ENCODE measurements at regions of chr21 and their contacts with region 1.

Region 1: GRCh38 chr21:42400525-42400924 is 3.2 kb upstream of the UBASH3A start:
- DNase-seq: peak in 1 of 9 donors; percentile 54
- ATAC-seq: no peak
- H3K4me3 ChIP-seq: no peak overlapping the region
- H3K4me3 Mint-ChIP-seq: peak overlapping the region in 4 of 10 donors; percentile 18 to 37 (median 32)
- H3K27ac ChIP-seq: no peak overlapping the region
- H3K27ac Mint-ChIP-seq: peak overlapping the region in 5 of 9 donors; percentile 8 to 87 (median 32)
- H3K4me1 ChIP-seq: peaks cover 21 to 42% of the 10 kb centered on the region in 2 donors
- H3K4me1 Mint-ChIP-seq: peaks cover 32 to 71% (median 61%) of the 10 kb centered on the region in 7 donors
- H3K27me3 ChIP-seq: no peaks in the 10 kb centered on the region
- H3K27me3 Mint-ChIP-seq: no peaks in the 10 kb centered on the region

Region 2: GRCh38 chr21:41466024-41466835 is 934.3 kb before region 1 on chr21:
- CTCF ChIA-PET with region 1: no interaction called
- POLR2A ChIA-PET with region 1: no interaction called
- intact Hi-C with region 1: no loop called
- DNase-seq: no peak
- ATAC-seq: no peak
- H3K4me3 ChIP-seq: no peak overlapping the region
- H3K4me3 Mint-ChIP-seq: no peak overlapping the region
- H3K27ac ChIP-seq: no peak overlapping the region
- H3K27ac Mint-ChIP-seq: no peak overlapping the region
- H3K4me1 ChIP-seq: no peaks in the 10 kb centered on the region
- H3K4me1 Mint-ChIP-seq: peaks cover 0 to 16% (median 0%) of the 10 kb centered on the region in 7 donors
- H3K27me3 ChIP-seq: no peaks in the 10 kb centered on the region
- H3K27me3 Mint-ChIP-seq: peaks cover 6 to 32% (median 22%) of the 10 kb centered on the region in 5 donors

Region 3: GRCh38 chr21:42337830-42338728 is 62.4 kb before region 1 on chr21:
- CTCF ChIA-PET with region 1: interaction called, 17 read pairs
- POLR2A ChIA-PET with region 1: interaction called, 6 read pairs
- intact Hi-C with region 1: loop called in 1 of 2 experiments (anchors 1 kb)
- DNase-seq: peak; percentile 68 to 85 (median 78)
- ATAC-seq: peak; percentile 99
- H3K4me3 ChIP-seq: no peak overlapping the region
- H3K4me3 Mint-ChIP-seq: peak overlapping the region; percentile 28 to 76 (median 60)
- H3K27ac ChIP-seq: no peak overlapping the region
- H3K27ac Mint-ChIP-seq: peak overlapping the region in 7 of 9 donors; percentile 19 to 75 (median 53)
- H3K4me1 ChIP-seq: peaks cover 4 to 7% of the 10 kb centered on the region in 2 donors
- H3K4me1 Mint-ChIP-seq: peaks cover 5 to 12% (median 8%) of the 10 kb centered on the region in 7 donors
- H3K27me3 ChIP-seq: no peaks in the 10 kb centered on the region
- H3K27me3 Mint-ChIP-seq: peaks cover 0 to 32% (median 0%) of the 10 kb centered on the region in 5 donors

Region 4: GRCh38 chr21:42350896-42351543 is 49.5 kb before region 1 on chr21 and contains the start of gene TFF2:
- CTCF ChIA-PET with region 1: no interaction called
- POLR2A ChIA-PET with region 1: no interaction called
- intact Hi-C with region 1: no loop called
- DNase-seq: peak in 1 of 9 donors; percentile 18
- ATAC-seq: no peak
- H3K4me3 ChIP-seq: no peak within 1 kb of the TSS
- H3K4me3 Mint-ChIP-seq: no peak within 1 kb of the TSS
- H3K27ac ChIP-seq: no peak within 1 kb of the TSS
- H3K27ac Mint-ChIP-seq: peak within 1 kb of the TSS in 1 of 9 donors; percentile 72
- H3K4me1 ChIP-seq: no peaks in the 10 kb centered on the region
- H3K4me1 Mint-ChIP-seq: peaks cover 0 to 3% (median 0%) of the 10 kb centered on the region in 7 donors
- H3K27me3 ChIP-seq: no peaks in the 10 kb centered on the region
- H3K27me3 Mint-ChIP-seq: peaks cover 0 to 10% (median 0%) of the 10 kb centered on the region in 5 donors
- total RNA-seq, gene TFF2: not detected

Region 5: DNA sequence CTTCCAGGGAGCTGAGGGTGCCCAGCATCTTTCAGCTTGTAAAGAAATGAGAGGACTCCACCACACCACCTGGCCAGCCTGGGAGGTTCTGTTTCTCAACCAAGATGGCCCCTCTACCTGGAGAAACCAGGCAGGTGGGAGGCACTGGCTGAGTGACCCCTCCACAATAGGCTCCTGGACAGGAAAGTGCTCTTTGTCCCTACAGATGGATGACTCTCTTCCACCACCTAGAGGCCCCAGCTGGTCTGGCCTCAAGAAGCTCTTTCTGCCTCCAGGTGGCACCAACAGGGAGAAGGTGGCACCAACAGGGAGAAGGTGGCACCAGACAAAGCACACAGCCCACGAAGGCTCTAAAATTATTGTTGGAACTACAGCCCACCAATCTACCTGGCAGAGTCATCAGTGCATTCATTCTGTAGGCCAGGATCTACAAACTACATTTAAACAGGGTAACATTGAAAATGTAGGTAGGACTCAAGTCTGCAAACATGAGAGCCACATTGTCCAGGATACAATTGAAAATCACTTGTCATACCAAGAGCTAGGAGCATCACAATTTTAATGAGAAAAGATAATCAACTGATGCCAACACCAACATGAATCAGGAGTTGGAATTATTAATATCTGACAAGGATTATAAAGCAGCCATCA is 19.1 kb before region 1 on chr21:
- CTCF ChIA-PET with region 1: interaction called, 18 read pairs
- POLR2A ChIA-PET with region 1: interaction called, 9 read pairs
- intact Hi-C with region 1: loop called in 1 of 2 experiments (anchors 1 kb)
- DNase-seq: peak in 4 of 9 donors; percentile 22 to 41 (median 29)
- ATAC-seq: peak; percentile 77
- H3K4me3 ChIP-seq: no peak overlapping the region
- H3K4me3 Mint-ChIP-seq: no peak overlapping the region
- H3K27ac ChIP-seq: no peak overlapping the region
- H3K27ac Mint-ChIP-seq: peak overlapping the region in 2 of 9 donors; percentile 29 to 71
- H3K4me1 ChIP-seq: peaks cover 0 to 14% of the 10 kb centered on the region in 2 donors
- H3K4me1 Mint-ChIP-seq: peaks cover 6 to 29% (median 25%) of the 10 kb centered on the region in 7 donors
- H3K27me3 ChIP-seq: no peaks in the 10 kb centered on the region
- H3K27me3 Mint-ChIP-seq: no peaks in the 10 kb centered on the region

Region 6: DNA sequence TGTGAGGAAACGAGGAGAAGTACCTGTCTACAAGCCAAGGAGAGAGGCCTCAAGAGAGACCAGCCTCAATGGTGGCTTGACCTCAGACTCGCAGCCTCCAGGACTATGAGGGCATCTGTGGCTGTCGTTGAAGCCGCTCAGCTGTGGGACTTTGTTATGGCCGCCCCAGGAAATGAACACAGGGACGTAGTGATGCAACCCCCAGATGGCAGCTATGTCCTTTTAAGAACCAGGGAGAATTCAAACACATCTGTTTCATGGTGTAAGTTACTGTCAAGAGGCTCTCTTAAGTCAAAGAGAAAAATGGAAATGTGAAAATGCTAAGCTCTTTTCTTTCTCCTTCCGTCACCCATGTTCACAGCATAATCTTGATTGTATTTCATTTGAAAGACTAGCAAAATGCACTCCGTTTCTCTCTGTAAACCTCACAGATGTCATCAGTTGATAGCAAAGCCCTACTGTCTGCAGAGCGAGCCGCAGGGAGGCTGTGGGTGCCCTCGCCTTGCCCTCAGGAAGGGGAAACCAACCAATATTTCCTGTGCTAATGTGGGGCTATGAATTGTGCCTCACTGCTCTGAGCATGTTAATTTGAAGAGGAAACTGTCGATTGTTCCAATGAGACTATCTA is 24.5 kb after region 1 on chr21:
- CTCF ChIA-PET with region 1: interaction called, 32 read pairs
- POLR2A ChIA-PET with region 1: interaction called, 181 read pairs
- intact Hi-C with region 1: loop called in 1 of 2 experiments (anchors 1 kb)
- DNase-seq: peak; percentile 44 to 90 (median 84)
- ATAC-seq: peak; percentile 94
- H3K4me3 ChIP-seq: peak overlapping the region; percentile 22
- H3K4me3 Mint-ChIP-seq: peak overlapping the region; percentile 54 to 86 (median 80)
- H3K27ac ChIP-seq: peak overlapping the region; percentile 85
- H3K27ac Mint-ChIP-seq: peak overlapping the region; percentile 83 to 94 (median 89)
- H3K4me1 ChIP-seq: peaks cover 68 to 71% of the 10 kb centered on the region in 2 donors
- H3K4me1 Mint-ChIP-seq: peaks cover 59 to 88% (median 81%) of the 10 kb centered on the region in 7 donors
- H3K27me3 ChIP-seq: no peaks in the 10 kb centered on the region
- H3K27me3 Mint-ChIP-seq: peaks cover 0 to 6% (median 0%) of the 10 kb centered on the region in 5 donors

Region 7: DNA sequence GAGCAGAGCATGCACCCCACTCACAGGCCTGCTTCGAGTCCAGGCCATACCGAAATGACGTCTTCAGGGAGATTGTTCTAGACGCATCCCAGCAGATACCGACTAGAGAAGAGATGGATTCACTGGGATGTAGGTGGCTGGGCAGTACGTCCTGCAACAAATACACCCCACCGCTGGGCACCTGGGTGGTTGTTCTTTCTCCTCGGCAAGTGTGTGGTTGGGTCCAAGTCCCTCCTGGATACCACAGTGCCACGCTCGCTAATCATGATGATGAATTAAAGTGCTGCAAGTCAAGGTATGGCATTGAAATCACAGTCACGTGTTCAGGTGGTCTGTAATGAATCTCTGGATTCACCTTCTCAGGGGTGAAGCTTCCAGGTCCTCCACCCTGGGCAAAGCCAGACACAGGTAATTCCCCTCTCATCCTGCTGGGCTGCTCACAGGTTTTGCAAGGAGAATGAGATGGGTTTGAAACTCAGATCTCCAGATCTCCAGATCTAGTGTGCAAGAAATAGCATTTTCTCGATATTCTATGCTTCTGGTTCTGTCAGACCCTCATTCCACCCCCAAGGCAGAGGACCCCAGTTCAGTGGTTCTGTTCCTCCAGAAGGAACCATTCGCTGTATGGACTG is 48.9 kb after region 1 on chr21:
- CTCF ChIA-PET with region 1: interaction called, 9 read pairs
- POLR2A ChIA-PET with region 1: interaction called, 11 read pairs
- intact Hi-C with region 1: loop called in 1 of 2 experiments (anchors 1 kb)
- DNase-seq: no peak
- ATAC-seq: no peak
- H3K4me3 ChIP-seq: no peak overlapping the region
- H3K4me3 Mint-ChIP-seq: peak overlapping the region in 2 of 10 donors; percentile 52 to 60
- H3K27ac ChIP-seq: peak overlapping the region; percentile 61
- H3K27ac Mint-ChIP-seq: peak overlapping the region; percentile 93 to 99 (median 97)
- H3K4me1 ChIP-seq: peaks cover 4 to 15% of the 10 kb centered on the region in 2 donors
- H3K4me1 Mint-ChIP-seq: peaks cover 13 to 55% (median 40%) of the 10 kb centered on the region in 7 donors
- H3K27me3 ChIP-seq: no peaks in the 10 kb centered on the region
- H3K27me3 Mint-ChIP-seq: peaks cover 0 to 4% (median 0%) of the 10 kb centered on the region in 5 donors

Region 8: GRCh38 chr21:42513985-42514882 is 113.7 kb after region 1 on chr21:
- CTCF ChIA-PET with region 1: no interaction called
- POLR2A ChIA-PET with region 1: interaction called, 6 read pairs
- intact Hi-C with region 1: loop called in 1 of 2 experiments (anchors 5 kb)
- DNase-seq: peak in 8 of 9 donors; percentile 42 to 76 (median 54)
- ATAC-seq: peak; percentile 83
- H3K4me3 ChIP-seq: peak overlapping the region; percentile 82
- H3K4me3 Mint-ChIP-seq: peak overlapping the region; percentile 76 to 97 (median 89)
- H3K27ac ChIP-seq: peak overlapping the region; percentile 87
- H3K27ac Mint-ChIP-seq: peak overlapping the region; percentile 58 to 88 (median 84)
- H3K4me1 ChIP-seq: peaks cover 18 to 20% of the 10 kb centered on the region in 2 donors
- H3K4me1 Mint-ChIP-seq: peaks cover 22 to 45% (median 38%) of the 10 kb centered on the region in 7 donors
- H3K27me3 ChIP-seq: no peaks in the 10 kb centered on the region
- H3K27me3 Mint-ChIP-seq: peaks cover 0 to 19% (median 0%) of the 10 kb centered on the region in 5 donors